T-cell (primary cell): ENCODE measurements at regions of chr4 and their contacts with region 1.

Region 1: DNA sequence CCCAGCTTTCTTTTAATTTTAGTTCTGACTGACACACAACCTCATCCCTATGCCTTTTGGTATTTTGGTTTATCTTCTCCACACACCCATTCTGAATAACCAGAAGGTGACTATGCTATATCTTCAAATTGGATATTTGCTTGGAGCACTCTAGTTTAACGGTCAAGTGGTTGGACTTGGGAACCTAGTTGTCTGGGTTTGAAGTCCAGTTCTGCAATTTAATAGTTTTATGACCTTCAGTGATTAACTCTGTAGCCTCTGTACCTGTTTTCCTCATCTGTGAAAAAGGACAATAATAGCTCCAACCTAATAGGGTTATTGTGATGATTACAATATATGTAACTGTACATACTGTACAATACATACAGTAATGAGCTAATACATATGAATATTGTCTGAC is 20.0 kb downstream of the PPM1K start:
- DNase-seq: no peak
- ATAC-seq: no peak
- H3K4me3 ChIP-seq: no peak overlapping the region
- H3K4me3 Mint-ChIP-seq: no peak overlapping the region
- H3K27ac ChIP-seq: no peak overlapping the region
- H3K27ac Mint-ChIP-seq: no peak overlapping the region
- H3K4me1 ChIP-seq: no peaks in the 10 kb centered on the region
- H3K4me1 Mint-ChIP-seq: no peaks in the 10 kb centered on the region
- H3K27me3 ChIP-seq: no peaks in the 10 kb centered on the region
- H3K27me3 Mint-ChIP-seq: no peaks in the 10 kb centered on the region

Region 2: GRCh38 chr4:86816501-86817273 is 1447.6 kb before region 1 on chr4:
- CTCF ChIA-PET with region 1: no interaction called
- POLR2A ChIA-PET with region 1: no interaction called
- DNase-seq: no peak
- ATAC-seq: no peak
- H3K4me3 ChIP-seq: no peak overlapping the region
- H3K4me3 Mint-ChIP-seq: no peak overlapping the region
- H3K27ac ChIP-seq: no peak overlapping the region
- H3K27ac Mint-ChIP-seq: no peak overlapping the region
- H3K4me1 ChIP-seq: no peaks in the 10 kb centered on the region
- H3K4me1 Mint-ChIP-seq: no peaks in the 10 kb centered on the region
- H3K27me3 ChIP-seq: no peaks in the 10 kb centered on the region
- H3K27me3 Mint-ChIP-seq: no peaks in the 10 kb centered on the region

Region 3: GRCh38 chr4:87144356-87144755 is 1120.0 kb before region 1 on chr4:
- CTCF ChIA-PET with region 1: no interaction called
- POLR2A ChIA-PET with region 1: interaction called in 1 of 2 experiments, 14 read pairs
- DNase-seq: no peak
- ATAC-seq: no peak
- H3K4me3 ChIP-seq: no peak overlapping the region
- H3K4me3 Mint-ChIP-seq: no peak overlapping the region
- H3K27ac ChIP-seq: no peak overlapping the region
- H3K27ac Mint-ChIP-seq: peak overlapping the region in 1 of 2 donors; percentile 7
- H3K4me1 ChIP-seq: no peaks in the 10 kb centered on the region
- H3K4me1 Mint-ChIP-seq: peaks cover 0 to 2% (median 0%) of the 10 kb centered on the region in 3 donors
- H3K27me3 ChIP-seq: no peaks in the 10 kb centered on the region
- H3K27me3 Mint-ChIP-seq: no peaks in the 10 kb centered on the region

Region 4: DNA sequence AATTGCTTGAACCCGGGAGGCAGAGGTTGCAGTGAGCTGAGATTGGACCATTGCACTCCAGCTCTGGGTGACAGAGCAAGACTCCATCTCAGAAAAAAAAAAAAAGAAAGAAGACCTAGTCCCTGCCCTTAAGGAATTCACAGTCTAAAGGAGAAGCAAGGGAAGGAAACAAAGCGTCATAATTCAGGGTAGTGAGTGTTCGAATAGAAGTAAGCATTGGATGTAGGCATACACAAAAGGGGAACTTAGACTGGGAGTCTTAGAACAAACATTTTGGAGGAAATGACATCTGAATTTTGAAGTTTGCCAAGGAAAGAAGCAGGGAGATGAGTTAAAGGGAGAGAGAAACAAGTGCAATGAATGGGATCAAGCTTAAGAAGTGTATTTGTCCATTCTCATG is 12.4 kb before region 1 on chr4:
- CTCF ChIA-PET with region 1: no interaction called
- POLR2A ChIA-PET with region 1: no interaction called
- DNase-seq: no peak
- ATAC-seq: no peak
- H3K4me3 ChIP-seq: no peak overlapping the region
- H3K4me3 Mint-ChIP-seq: no peak overlapping the region
- H3K27ac ChIP-seq: no peak overlapping the region
- H3K27ac Mint-ChIP-seq: no peak overlapping the region
- H3K4me1 ChIP-seq: no peaks in the 10 kb centered on the region
- H3K4me1 Mint-ChIP-seq: no peaks in the 10 kb centered on the region
- H3K27me3 ChIP-seq: no peaks in the 10 kb centered on the region
- H3K27me3 Mint-ChIP-seq: no peaks in the 10 kb centered on the region